AG04449 (cell line): ENCODE measurements at regions of chr19 and their contacts with region 1.

Region 1: DNA sequence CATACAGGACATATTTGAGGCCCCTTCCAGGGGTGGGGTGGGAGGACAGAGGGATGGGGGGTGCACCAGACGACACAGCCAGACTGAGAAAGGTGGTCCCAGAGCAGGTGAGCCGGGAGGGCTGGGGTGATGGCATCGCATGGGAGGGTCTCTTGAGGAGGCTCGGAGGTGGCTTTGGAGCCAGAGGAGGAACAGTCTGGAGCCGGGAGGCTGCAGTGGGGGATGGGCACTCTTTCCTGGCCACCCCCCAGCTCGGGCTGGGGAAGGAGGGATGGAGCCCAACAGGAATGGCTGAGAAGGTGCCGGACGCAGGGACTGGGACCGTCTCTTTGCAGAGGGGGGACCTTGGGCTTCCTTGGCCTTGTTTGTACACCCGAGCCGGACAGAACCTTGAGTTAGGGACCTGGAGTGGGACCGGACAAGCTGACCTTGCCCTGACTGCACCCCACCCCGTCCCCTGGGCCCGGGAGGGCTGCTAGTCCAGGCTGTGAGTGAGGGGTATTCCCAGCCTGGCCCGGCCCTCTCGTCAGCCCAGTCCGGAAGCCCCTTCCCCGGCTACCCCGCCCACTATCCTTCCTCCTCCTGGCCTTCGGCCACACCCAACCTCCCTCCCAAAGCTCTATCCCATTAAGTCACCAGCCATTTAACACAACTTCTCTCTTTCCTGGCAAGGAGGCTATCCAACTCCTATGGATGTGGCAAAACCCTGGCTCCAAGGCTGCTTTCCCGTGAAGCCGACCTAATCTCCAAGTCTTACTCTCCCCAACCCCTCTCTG is 816 bp upstream of the TBXA2R start:
- DNase-seq: no peak
- H3K4me3 ChIP-seq: peak overlapping the region; percentile 72
- CTCF ChIP-seq: no peak

Region 2: DNA sequence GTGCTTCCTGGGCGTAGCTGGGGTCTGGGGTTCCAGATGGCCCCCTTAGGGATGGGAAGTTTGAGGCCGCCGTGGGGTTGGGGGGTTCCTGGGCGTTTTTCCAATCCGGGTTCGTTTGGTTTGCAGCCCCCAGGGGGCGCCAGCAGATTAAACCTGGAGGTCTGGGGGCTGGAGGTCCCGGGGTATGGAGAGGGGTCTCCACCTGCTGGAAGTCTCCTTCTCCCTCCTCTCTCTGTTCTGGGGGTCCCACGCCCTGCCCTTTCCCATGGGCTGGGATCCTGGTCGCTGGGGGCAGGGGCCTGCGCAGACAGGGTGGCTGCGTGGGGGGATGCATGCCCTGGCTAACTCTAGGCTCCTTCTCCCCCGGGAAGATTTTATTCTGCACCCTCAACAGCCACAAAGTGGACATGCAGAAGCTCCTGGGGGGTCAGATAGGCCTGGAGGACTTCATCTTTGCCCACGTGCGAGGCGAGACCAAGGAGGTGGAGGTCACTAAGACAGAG is 21.3 kb before region 1 on chr19:
- CTCF ChIA-PET with region 1: interaction called, 10 read pairs
- POLR2A ChIA-PET with region 1: no interaction called
- DNase-seq: no peak
- H3K4me3 ChIP-seq: peak overlapping the region; percentile 36
- CTCF ChIP-seq: peak; percentile 27

Region 3: DNA sequence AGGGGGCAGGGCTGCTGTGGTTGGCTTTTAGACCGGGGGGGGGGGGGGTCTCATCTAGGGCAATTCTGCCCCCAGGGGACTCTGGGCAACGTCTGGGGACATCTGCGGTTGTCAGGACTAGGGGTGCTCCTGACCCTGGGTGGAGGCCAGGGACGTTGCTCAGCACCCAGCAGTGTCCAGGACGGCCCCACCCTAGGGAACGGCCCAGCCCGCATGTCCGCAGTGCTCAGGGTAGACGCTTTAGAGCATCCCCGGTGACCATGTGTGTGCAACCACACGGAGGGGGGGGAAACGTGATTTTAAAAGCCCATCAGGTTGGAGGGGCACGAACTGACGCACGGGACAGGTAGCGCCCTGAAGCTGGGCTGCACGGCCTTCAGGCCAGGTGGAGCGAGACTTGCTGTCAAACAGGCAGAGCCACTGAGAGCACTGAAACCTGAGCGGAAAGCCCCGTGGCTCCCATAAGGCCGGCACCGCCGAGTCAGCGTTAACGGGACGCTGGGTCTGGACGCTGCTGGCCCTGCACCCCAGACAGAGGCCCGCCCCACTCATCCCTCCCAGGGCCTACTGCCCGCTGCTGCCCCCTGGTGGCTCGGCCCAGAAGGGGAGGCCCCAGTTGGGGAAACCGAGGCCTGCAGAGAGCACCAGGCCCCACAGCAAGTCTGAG is 10.8 kb after region 1 on chr19:
- CTCF ChIA-PET with region 1: interaction called, 37 read pairs
- POLR2A ChIA-PET with region 1: interaction called, 5 read pairs
- DNase-seq: no peak
- H3K4me3 ChIP-seq: no peak overlapping the region
- CTCF ChIP-seq: peak; percentile 90

Region 4: GRCh38 chr19:3632739-3633558 is 25.5 kb after region 1 on chr19:
- CTCF ChIA-PET with region 1: no interaction called
- POLR2A ChIA-PET with region 1: no interaction called
- DNase-seq: no peak
- H3K4me3 ChIP-seq: no peak overlapping the region
- CTCF ChIP-seq: no peak